HepG2 (cell line): ENCODE measurements at regions of chr2 and their contacts with region 1.

Region 1: DNA sequence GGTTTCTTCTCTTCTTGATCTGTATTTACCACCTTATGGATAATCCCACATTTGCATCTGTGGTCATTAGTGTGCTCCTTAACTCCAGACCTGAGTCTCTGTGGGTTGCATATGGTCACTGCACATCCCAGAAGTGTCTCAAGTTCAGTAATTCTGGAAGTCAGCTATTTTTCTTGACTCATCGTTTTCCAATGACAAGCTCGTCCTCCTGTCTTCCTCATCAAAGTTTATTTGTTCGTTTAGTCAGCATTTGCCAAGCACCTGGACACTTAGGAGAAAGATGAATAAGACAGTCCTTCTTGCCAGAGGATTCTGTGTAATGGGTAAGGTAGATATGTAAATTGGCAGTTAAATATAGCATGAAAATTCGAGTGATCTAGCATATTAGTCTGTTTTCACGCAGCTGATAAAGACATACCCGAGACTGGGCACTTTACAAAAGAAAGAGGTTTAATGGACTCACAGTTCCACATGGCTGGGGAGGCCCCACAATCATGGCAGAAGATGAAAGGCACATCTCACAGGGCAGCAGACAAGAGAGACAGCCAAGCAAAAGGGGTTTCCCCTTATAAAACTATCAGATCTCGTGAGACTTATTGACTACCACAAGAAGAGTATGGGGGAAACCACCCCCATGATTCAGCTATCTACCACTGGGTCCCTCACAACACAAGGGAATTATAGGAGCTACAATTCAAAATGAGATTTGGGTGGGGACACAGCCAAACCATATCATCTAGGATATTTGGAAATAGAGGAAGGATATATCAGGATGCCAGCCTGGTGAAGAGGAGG is 19.4 kb downstream of the FASTKD2 start:
- DNase-seq: no peak
- ATAC-seq: no peak
- H3K4me3 ChIP-seq: no peak overlapping the region
- H3K27ac ChIP-seq: no peak overlapping the region
- H3K4me1 ChIP-seq: no peaks in the 10 kb centered on the region
- H3K27me3 ChIP-seq: no peaks in the 10 kb centered on the region
- CTCF ChIP-seq: no peak
- EP300 ChIP-seq: no peak
- POLR2A ChIP-seq: no peak
- RAD21 ChIP-seq: no peak

Region 2: GRCh38 chr2:206765242-206766056 is 19.3 kb before region 1 on chr2 and contains the starts of genes FASTKD2 and MDH1B:
- CTCF ChIA-PET with region 1: no interaction called
- POLR2A ChIA-PET with region 1: interaction called, 7 read pairs
- in situ Hi-C with region 1: no loop called
- intact Hi-C with region 1: loop called (anchors 2 kb)
- DNase-seq: peak; percentile 93
- ATAC-seq: peak; percentile 97
- H3K4me3 ChIP-seq: peak within 1 kb of the TSS; percentile 77 to 84 (median 82)
- H3K27ac ChIP-seq: peak within 1 kb of the TSS; percentile 84
- H3K4me1 ChIP-seq: peaks cover 44% of the 10 kb centered on the region
- H3K27me3 ChIP-seq: no peaks in the 10 kb centered on the region; a peak in 1 of 5 replicates
- CTCF ChIP-seq: no peak
- EP300 ChIP-seq: 0 out of 4 replicates have a peak, but pooled peaks of 1 of the 2 experiments have one; percentile 15
- POLR2A ChIP-seq: peak; percentile 87 to 99
- RAD21 ChIP-seq: peak; percentile 58; the same call in 1 of the 2 replicates
- total RNA-seq, gene FASTKD2: 77.8 and 88.0 TPM in 2 replicates
- total RNA-seq, gene MDH1B: 0.86 and 0.91 TPM in 2 replicates

Region 3: DNA sequence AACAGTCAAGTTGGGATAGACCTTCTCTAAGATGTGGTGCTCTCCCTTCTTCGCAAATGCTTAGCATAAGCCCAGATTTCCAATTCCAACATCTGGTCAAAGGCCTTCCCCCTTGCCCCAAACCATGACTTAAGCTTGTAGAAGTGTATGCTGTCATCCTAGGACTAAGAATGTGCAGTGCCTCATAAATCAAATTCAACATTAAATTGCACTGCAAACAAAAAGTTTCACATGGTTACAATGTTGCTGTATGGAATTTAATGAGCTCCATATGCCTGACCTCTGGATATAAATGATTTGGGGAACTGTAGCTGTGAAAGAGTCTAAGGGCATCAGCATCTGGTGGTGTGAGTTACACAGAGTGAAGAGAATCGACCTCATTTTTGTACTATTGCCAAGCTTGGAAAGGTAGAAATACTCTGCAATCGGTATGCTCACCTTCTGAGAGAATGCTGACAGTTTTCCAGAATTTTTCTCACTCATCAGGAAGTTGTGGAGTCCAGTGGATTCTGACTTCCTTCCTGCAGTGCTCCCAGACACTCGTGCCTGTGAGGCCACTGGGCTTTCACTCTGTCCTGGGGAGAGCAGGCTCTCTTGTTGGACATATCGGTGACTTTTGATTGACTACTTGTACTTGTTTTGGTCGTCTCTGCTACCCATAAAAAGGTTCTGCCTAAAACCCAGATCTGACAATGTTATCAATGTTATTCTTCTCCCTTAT is 21.3 kb after region 1 on chr2:
- CTCF ChIA-PET with region 1: no interaction called
- POLR2A ChIA-PET with region 1: no interaction called
- in situ Hi-C with region 1: no loop called
- intact Hi-C with region 1: no loop called
- DNase-seq: no peak
- ATAC-seq: no peak; the same call in 1 of the 3 replicates
- H3K4me3 ChIP-seq: no peak overlapping the region
- H3K27ac ChIP-seq: no peak overlapping the region
- H3K4me1 ChIP-seq: no peaks in the 10 kb centered on the region
- H3K27me3 ChIP-seq: no peaks in the 10 kb centered on the region
- CTCF ChIP-seq: no peak
- EP300 ChIP-seq: no peak
- POLR2A ChIP-seq: no peak
- RAD21 ChIP-seq: no peak